ENCODE measurements at regions of chr15 and their contacts with region 1.

Region 1: GRCh38 chr15:35271371-35272043 is 186.4 kb upstream of the NANOGP8 start:
- DNase-seq: no peak
- ATAC-seq: no peak
- H3K4me3 Mint-ChIP-seq: no peak overlapping the region
- H3K27ac Mint-ChIP-seq: no peak overlapping the region
- H3K4me1 Mint-ChIP-seq: no peaks in the 10 kb centered on the region
- H3K27me3 Mint-ChIP-seq: no peaks in the 10 kb centered on the region

Region 2: GRCh38 chr15:35130245-35130644 is 141.3 kb before region 1 on chr15:
- CTCF ChIA-PET with region 1: no interaction called
- POLR2A ChIA-PET with region 1: no interaction called
- intact Hi-C with region 1: no loop called
- DNase-seq: no peak
- ATAC-seq: no peak
- H3K4me3 Mint-ChIP-seq: no peak overlapping the region
- H3K27ac Mint-ChIP-seq: no peak overlapping the region
- H3K4me1 Mint-ChIP-seq: no peaks in the 10 kb centered on the region
- H3K27me3 Mint-ChIP-seq: peaks cover 4% of the 10 kb centered on the region

Region 3: DNA sequence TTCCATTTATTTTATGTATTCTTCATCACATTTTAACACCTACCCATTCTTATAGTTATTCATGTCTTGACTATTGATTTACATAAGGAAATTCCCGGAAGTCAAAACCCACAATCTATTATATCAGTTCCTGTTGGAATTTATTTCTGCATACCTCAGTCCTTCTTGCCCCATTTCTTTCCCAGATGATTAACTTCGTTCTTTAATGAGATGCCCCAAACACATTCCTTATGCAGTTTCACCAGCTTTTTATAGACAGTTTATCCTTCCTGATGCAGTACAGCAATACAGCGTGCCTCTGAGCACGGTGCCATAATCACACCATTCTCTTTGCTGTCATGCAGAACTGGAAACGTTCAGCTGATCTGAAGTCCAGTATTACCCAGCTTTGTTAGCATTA is 10.6 kb before region 1 on chr15:
- CTCF ChIA-PET with region 1: no interaction called
- POLR2A ChIA-PET with region 1: no interaction called
- intact Hi-C with region 1: loop called in 1 of 2 experiments (anchors 1 kb)
- DNase-seq: no peak
- ATAC-seq: no peak
- H3K4me3 Mint-ChIP-seq: no peak overlapping the region
- H3K27ac Mint-ChIP-seq: no peak overlapping the region
- H3K4me1 Mint-ChIP-seq: no peaks in the 10 kb centered on the region
- H3K27me3 Mint-ChIP-seq: no peaks in the 10 kb centered on the region

Measured in activated CD4-positive, alpha-beta T cell treated with anti-CD3 and anti-CD28 coated beads for 36 hours (primary cell).